Breast epithelium (tissue), 4 donors: ENCODE measurements at regions of chr3 and their contacts with region 1.

Region 1: DNA sequence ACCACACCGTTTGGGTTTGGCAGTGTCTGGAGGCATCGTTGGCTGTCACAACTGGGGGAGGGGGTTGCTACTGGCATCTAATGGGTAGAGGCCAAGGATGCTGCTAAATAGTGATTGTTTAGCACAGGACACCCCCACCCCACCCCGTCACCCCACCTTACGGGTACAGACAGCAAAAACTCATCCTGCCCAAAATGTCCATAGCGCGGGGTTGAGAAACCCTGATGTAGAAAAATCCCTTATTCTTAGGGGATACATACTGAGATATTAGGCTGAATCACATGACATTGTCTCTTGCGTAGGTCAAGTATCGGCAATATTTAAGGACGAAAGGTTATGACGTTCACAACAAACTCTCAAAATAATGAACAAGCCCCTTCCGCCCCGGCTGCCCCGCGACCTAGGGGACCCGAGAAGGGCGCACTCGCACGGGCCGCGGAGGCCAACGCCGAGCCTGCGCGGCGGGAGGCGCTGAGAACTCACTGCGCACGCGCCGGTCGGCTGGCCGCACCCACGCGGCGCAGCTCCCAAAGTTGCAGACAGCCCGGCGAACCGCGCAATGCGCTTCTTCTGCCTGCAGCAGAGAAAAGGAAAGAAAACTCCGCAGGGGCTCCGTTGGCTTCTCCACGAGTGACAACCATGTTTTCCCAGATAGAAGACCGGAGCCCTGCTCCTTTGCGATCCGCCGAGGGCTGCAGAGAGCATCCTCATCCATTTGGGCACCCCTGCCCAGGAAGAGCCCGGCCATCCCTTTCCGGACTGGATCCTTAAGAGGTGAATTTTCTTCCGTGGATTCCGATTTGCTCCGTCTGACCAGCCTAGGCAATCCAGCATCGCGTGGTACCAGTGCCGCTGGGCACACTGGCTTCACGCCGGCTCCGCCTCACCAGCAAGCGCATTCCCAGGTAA is 136.8 kb upstream of the CCDC54 start:
- DNase-seq: peak; percentile 52 to 67
- H3K4me3 ChIP-seq: peak overlapping the region; percentile 76 to 89 (median 85)
- H3K27ac ChIP-seq: peak overlapping the region; percentile 82 to 88
- H3K4me1 ChIP-seq: no peaks in the 10 kb centered on the region
- H3K27me3 ChIP-seq: no peaks in the 10 kb centered on the region
- CTCF ChIP-seq: no peak
- POLR2A ChIP-seq: peak; percentile 20

Region 2: GRCh38 chr3:107271787-107272387 is 31.4 kb after region 1 on chr3:
- intact Hi-C with region 1: loop called (anchors 2 kb)
- DNase-seq: no peak
- H3K4me3 ChIP-seq: no peak overlapping the region
- H3K27ac ChIP-seq: no peak overlapping the region
- H3K4me1 ChIP-seq: no peaks in the 10 kb centered on the region
- H3K27me3 ChIP-seq: no peaks in the 10 kb centered on the region
- CTCF ChIP-seq: peak; percentile 50 to 66 (median 64)
- POLR2A ChIP-seq: no peak

Region 3: GRCh38 chr3:107740992-107741896 is 500.8 kb after region 1 on chr3:
- intact Hi-C with region 1: no loop called
- DNase-seq: no peak
- H3K4me3 ChIP-seq: no peak overlapping the region
- H3K27ac ChIP-seq: no peak overlapping the region
- H3K4me1 ChIP-seq: no peaks in the 10 kb centered on the region
- H3K27me3 ChIP-seq: no peaks in the 10 kb centered on the region
- CTCF ChIP-seq: peak in 2 of 3 donors; percentile 53 to 56
- POLR2A ChIP-seq: no peak